Activated T-helper 1 cell treated with anti-CD3 and anti-CD28 coated beads, Interleukin-12 subunit alpha, Interleukin-12 subunit beta, Interleukin-2, Interleukin-4 antibody, amounts not matched to agents 30 ng/mL and 10 ng/mL and 1 ng/mL, durations not matched to agents 14 hours and 24 hours and 36 hours (primary cell): ENCODE measurements at regions of chr9 and their contacts with region 1.

Region 1: DNA sequence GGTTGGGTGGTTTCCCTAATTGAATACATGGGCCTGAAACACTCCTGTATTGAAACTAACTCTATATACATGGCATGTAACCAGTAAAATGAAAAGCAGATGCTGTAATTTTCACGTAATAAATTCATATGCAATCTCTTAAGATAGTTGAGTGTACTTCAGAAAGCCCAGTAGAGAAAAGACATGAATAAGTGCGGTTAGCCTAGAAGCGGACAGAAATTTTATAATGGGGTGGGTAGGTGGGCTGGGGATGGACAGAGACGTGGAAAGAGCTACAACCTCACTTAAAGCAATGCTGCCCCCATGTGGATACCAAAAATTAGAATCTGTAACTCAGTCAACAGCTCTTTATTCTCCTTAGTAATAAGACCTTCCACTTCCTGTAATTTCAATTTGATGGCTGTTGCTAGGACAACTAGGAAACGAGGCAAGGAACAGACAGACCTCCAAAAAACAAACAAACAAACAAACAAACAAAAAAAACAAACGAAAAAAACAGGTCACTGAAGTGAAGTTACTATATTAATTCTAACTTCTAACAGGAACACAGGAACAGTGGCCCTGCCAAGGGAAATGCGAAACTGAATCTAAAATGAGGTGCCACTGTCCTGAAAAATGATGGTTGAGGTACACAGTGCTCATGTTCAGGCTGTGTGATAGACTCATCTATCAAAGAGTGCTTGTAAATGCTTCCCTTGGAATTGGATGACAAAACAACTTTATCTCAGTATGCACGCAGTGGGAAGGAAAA is 103.4 kb upstream of the GNA14 start:
- DNase-seq: no peak
- H3K4me3 Mint-ChIP-seq: no peak overlapping the region
- H3K27ac Mint-ChIP-seq: no peak overlapping the region
- H3K4me1 Mint-ChIP-seq: peaks cover 26% of the 10 kb centered on the region
- H3K27me3 Mint-ChIP-seq: no peaks in the 10 kb centered on the region

Region 2: GRCh38 chr9:77433675-77434445 is 317.7 kb before region 1 on chr9:
- intact Hi-C with region 1: loop called (anchors 1 kb)
- DNase-seq: peak; percentile 15
- H3K4me3 Mint-ChIP-seq: no peak overlapping the region
- H3K27ac Mint-ChIP-seq: no peak overlapping the region
- H3K4me1 Mint-ChIP-seq: peaks cover 5% of the 10 kb centered on the region
- H3K27me3 Mint-ChIP-seq: peaks cover 3% of the 10 kb centered on the region

Region 3: DNA sequence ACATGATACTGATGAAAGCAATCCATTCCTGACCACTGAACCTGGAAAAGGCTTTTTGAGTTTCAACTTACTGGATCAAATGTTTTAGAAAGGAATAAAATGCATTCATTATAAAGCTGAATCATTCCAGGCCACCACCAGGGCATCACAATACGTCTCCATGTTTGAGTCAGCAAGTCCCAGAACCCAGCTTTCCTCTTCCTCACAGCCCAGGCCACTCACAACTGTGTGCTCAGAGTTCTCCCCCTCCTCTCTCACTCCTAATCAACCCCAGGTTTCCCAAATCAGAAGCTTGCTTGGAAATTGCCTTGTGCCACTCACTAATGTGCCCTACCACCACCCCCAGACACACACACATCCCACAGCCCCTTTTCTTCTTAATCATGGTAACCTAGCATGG is 195.1 kb before region 1 on chr9:
- intact Hi-C with region 1: loop called (anchors 10 kb)
- DNase-seq: no peak
- H3K4me3 Mint-ChIP-seq: no peak overlapping the region
- H3K27ac Mint-ChIP-seq: no peak overlapping the region
- H3K4me1 Mint-ChIP-seq: no peaks in the 10 kb centered on the region
- H3K27me3 Mint-ChIP-seq: peaks cover 1% of the 10 kb centered on the region

Region 4: DNA sequence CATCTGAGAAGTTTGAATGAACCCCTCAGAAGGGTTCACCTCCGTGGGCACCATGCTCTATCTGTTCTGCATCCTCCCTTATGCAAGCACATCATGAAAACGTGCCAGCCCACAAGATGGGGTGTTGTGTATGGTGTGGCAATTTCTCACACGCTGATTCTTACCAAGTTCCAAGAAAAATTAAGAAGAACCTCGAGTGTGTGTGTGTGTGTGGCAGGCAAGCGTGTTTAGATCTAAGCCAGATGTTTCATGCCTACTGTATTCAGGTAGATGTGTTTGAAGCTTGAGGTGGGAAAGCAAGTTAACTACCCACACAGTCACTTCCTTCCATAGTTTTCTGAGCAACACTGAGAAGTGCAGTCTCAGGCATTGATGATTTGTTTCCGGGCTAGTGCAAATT is 25.7 kb before region 1 on chr9:
- intact Hi-C with region 1: loop called (anchors 2 kb)
- DNase-seq: peak; percentile 8
- H3K4me3 Mint-ChIP-seq: peak overlapping the region; percentile 37
- H3K27ac Mint-ChIP-seq: peak overlapping the region; percentile 92
- H3K4me1 Mint-ChIP-seq: peaks cover 41% of the 10 kb centered on the region
- H3K27me3 Mint-ChIP-seq: no peaks in the 10 kb centered on the region

Region 5: GRCh38 chr9:77807281-77807683 is 55.8 kb after region 1 on chr9:
- intact Hi-C with region 1: no loop called
- DNase-seq: no peak
- H3K4me3 Mint-ChIP-seq: no peak overlapping the region
- H3K27ac Mint-ChIP-seq: no peak overlapping the region
- H3K4me1 Mint-ChIP-seq: peaks cover 44% of the 10 kb centered on the region
- H3K27me3 Mint-ChIP-seq: no peaks in the 10 kb centered on the region

Region 6: GRCh38 chr9:78630966-78631365 is 879.5 kb after region 1 on chr9:
- intact Hi-C with region 1: no loop called
- DNase-seq: no peak
- H3K4me3 Mint-ChIP-seq: no peak overlapping the region
- H3K27ac Mint-ChIP-seq: no peak overlapping the region
- H3K4me1 Mint-ChIP-seq: no peaks in the 10 kb centered on the region
- H3K27me3 Mint-ChIP-seq: peaks cover 2% of the 10 kb centered on the region